ENCODE measurements at regions of chr10 and their contacts with region 1.

Region 1: DNA sequence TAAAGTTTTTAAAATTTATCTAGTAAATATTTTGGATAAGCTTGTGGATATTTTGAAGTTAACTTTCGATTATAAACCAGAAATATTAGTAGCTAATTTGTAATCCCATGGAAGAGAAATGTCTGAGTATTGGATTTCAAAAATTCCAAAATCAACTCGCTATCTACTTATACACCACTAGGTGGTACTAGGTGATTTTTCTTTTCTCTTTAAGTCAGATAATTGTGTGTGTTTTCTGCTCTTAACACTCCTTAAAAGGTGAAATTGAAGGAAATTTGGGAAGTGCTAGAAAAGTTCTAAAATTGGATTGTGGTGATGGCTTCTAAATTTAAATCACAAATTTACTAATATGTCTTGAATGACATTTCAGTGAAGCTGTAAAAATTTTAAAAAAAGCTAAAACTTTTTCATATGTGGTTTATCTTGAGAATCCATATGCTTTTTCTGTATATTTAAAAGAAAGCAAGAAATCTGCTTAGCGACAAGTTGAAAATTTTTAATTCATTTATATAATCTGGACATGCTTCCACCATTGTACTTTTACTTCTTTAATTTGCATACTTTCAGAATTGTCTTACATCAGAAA is 90.2 kb downstream of the IPMK start:
- DNase-seq: peak; percentile 13
- ATAC-seq: peak; percentile 38; the same call in 1 of the 2 replicates
- H3K4me3 ChIP-seq: no peak overlapping the region
- H3K27ac ChIP-seq: no peak overlapping the region
- H3K4me1 ChIP-seq: no peaks in the 10 kb centered on the region; a peak in 1 of 4 replicates
- H3K27me3 ChIP-seq: no peaks in the 10 kb centered on the region
- CTCF ChIP-seq: peak; percentile 45 to 72 (median 70); a peak in 5 of 6 replicates
- POLR2A ChIP-seq: no peak
- RAD21 ChIP-seq: peak; percentile 74

Region 2: DNA sequence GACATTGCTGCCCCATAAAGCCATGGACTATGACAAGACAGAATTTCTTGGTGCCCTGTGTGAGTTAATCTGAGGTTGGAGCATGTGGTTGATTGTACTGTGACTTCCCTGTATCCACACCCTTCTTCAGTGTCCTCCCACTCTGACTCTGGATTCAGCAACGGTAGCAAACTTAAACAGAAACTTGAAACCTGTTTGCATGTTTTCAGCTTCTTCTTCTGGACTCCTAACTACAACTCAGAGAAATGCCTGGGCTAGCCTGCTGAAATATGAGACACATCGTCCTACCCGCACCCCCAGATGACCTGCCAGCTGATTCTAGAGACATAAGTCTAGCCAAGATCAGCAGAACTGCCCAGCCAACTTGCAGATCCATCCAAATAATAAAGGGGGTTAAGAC is 11.8 kb after region 1 on chr10:
- CTCF ChIA-PET with region 1: interaction called, 16 read pairs
- POLR2A ChIA-PET with region 1: no interaction called
- RAD21 ChIA-PET with region 1: no interaction called
- intact Hi-C with region 1: no loop called
- DNase-seq: no peak
- ATAC-seq: no peak
- H3K4me3 ChIP-seq: no peak overlapping the region
- H3K27ac ChIP-seq: no peak overlapping the region
- H3K4me1 ChIP-seq: no peaks in the 10 kb centered on the region
- H3K27me3 ChIP-seq: no peaks in the 10 kb centered on the region
- CTCF ChIP-seq: no peak
- POLR2A ChIP-seq: no peak
- RAD21 ChIP-seq: no peak

Region 3: DNA sequence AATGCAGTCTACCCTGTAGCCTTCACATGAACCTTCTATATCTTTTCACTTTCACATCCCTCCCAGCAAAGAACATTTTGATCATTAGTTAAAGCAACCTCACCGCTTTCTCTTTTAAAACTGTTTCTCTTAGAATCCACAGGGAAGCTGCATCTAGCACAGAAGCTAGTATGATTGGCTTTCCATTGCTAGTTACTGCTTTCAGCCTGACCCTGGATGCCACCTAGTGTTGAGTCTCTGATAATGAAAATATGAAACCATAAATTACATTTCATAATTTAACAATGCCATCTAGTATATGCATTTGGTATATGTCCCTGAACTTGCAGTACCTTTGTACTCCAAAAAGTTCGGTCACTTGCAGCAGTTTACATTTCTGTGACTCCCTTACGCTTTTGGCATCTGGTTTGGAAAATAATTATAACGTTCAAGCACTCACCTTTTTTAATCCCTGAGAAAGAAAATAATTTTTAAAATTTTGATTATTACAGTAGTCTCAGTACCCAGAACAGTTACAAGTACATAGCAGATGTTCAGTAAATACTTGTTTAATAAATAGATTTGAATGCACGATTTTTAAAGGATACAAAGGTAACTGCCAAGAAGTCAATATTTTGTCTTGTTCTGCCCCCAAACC is 114.2 kb after region 1 on chr10:
- CTCF ChIA-PET with region 1: interaction called, 119 read pairs
- POLR2A ChIA-PET with region 1: no interaction called
- RAD21 ChIA-PET with region 1: interaction called in 1 of 2 experiments, 6 read pairs
- intact Hi-C with region 1: loop called (anchors 1 kb)
- DNase-seq: peak; percentile 24
- ATAC-seq: peak; percentile 79
- H3K4me3 ChIP-seq: no peak overlapping the region
- H3K27ac ChIP-seq: no peak overlapping the region
- H3K4me1 ChIP-seq: no peaks in the 10 kb centered on the region
- H3K27me3 ChIP-seq: no peaks in the 10 kb centered on the region
- CTCF ChIP-seq: peak; percentile 65 to 82 (median 73)
- POLR2A ChIP-seq: no peak
- RAD21 ChIP-seq: peak; percentile 83

Region 4: DNA sequence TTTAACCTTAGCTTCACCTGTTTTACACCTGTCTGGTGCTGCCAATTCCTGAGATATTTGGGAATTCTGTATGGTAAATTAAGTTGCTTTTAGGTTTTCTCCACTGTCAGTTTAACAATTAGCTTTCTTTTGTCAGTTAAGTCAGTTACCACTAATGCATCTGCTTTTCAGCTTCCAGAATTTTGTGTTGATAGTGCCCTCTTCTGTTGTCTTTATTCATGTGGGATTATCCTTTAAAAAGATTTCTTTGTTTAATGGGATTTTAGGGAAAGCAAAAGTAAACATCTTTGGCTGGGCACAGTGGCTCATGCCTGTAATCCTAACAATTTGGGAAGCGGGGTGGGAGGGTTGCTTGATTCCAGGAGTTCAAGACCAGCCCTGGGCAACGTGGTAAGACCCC is 215.9 kb after region 1 on chr10:
- CTCF ChIA-PET with region 1: interaction called, 3 read pairs
- POLR2A ChIA-PET with region 1: no interaction called
- RAD21 ChIA-PET with region 1: no interaction called
- intact Hi-C with region 1: loop called (anchors 5 kb)
- DNase-seq: no peak
- ATAC-seq: no peak
- H3K4me3 ChIP-seq: no peak overlapping the region
- H3K27ac ChIP-seq: no peak overlapping the region
- H3K4me1 ChIP-seq: no peaks in the 10 kb centered on the region
- H3K27me3 ChIP-seq: no peaks in the 10 kb centered on the region
- CTCF ChIP-seq: no peak
- POLR2A ChIP-seq: no peak
- RAD21 ChIP-seq: peak; percentile 25; the same call in 1 of the 2 replicates